ENCODE measurements at regions of chr4 and their contacts with region 1.

Region 1: GRCh38 chr4:168995537-168996295 is 14.3 kb downstream of the CBR4 start:
- DNase-seq: no peak
- H3K4me3 Mint-ChIP-seq: no peak overlapping the region
- H3K27ac Mint-ChIP-seq: no peak overlapping the region
- H3K4me1 Mint-ChIP-seq: no peaks in the 10 kb centered on the region
- H3K27me3 Mint-ChIP-seq: no peaks in the 10 kb centered on the region
- CTCF ChIP-seq: no peak

Region 2: DNA sequence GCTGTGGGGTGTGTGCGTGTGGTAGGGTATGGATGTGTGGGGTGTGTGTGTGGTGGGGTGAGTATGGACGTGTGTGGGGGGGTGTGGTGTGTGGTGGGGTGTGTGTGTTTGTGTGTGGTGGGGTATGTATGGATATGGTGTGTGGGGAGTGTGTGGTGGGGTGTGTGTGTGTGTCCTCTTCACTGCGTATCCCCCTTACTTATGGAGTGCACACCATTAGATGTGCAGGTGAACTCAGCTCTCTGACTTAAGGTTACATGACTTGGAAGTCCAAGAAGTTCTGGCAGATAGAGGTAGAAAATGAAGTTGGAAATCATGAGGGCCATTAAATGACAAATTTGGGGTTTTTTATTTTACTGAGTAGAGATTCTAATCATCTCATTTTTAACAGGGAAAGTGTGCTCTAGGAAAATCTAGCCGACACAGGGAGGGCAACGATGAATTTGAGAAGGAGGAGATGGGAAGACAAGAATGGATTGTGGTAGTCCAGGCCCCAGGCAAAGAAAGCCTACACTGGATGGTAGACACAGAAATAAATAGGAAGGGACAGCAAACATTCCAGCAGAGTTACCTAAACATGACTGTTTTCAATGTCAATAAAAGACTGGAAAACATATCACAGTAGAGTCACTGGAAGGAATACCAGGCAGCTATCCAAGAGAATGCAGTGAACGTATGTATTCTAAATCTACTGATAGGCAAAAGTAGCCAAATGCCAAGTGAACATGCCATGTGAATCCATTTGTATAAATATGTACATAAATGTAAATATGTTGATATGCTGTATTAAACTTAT is 316.1 kb before region 1 on chr4:
- CTCF ChIA-PET with region 1: no interaction called
- intact Hi-C with region 1: no loop called
- DNase-seq: no peak
- H3K4me3 Mint-ChIP-seq: no peak overlapping the region
- H3K27ac Mint-ChIP-seq: no peak overlapping the region
- H3K4me1 Mint-ChIP-seq: no peaks in the 10 kb centered on the region
- H3K27me3 Mint-ChIP-seq: no peaks in the 10 kb centered on the region
- CTCF ChIP-seq: no peak

Region 3: GRCh38 chr4:169485791-169486742 is 490.4 kb after region 1 on chr4:
- CTCF ChIA-PET with region 1: no interaction called
- intact Hi-C with region 1: loop called (anchors 2 kb)
- DNase-seq: peak; percentile 50
- H3K4me3 Mint-ChIP-seq: no peak overlapping the region
- H3K27ac Mint-ChIP-seq: no peak overlapping the region
- H3K4me1 Mint-ChIP-seq: no peaks in the 10 kb centered on the region
- H3K27me3 Mint-ChIP-seq: no peaks in the 10 kb centered on the region
- CTCF ChIP-seq: no peak

Measured in Calu3 (cell line).